H1 (cell line): ENCODE measurements at regions of chr2 and their contacts with region 1.

Region 1: DNA sequence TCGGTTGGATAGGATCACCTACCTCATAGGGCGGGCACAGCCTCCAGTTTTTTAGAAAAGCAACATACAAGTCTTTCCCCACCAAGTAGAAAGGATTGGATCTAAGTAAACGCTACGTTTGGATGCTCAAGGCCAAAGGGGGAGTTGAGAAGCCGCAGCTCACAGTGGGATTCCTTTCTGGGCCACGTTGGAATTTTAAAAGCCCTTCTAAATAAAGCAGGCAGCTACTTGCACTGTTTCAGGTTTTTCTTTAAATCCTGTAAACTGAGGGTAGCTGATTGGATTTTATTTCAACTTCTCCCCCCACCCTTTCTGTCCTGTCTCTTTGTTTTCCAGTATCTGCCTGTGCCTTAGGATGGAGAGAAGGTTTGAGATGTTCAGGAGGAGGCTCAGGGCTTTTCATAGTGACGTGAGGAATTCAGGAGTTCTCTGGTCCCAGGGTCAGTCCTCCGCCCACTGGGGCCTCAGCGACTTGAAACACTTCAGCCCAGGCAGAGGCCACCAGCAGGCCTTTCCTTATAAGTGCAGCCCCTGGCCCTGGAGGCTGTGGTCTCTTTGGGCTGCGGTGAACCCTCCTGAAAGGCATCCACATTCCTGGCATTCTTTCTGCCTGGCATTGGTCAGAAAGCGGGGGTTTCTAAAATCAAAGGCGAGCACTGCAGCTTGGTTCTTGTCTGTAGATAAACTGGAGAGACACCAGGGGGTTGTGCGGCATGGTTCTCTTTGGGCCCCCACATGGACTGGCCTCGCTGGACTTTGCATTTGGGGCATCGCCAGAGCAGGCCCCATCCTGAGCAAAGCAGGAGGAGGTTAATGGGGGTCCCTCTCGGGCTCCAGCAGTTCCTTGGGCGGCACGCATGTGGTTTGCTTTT is 44.5 kb downstream of the SH3BP4 start:
- DNase-seq: peak; percentile 68 to 87
- H3K4me3 ChIP-seq: peak overlapping the region in 1 of 4 experiments; percentile 26; a peak in 1 of 8 replicates
- H3K27ac ChIP-seq: peak overlapping the region; percentile 59; the same call in 1 of the 2 replicates
- H3K4me1 ChIP-seq: peaks cover 3 to 54% (median 31%) of the 10 kb centered on the region in 4 experiments
- H3K27me3 ChIP-seq: no peaks in the 10 kb centered on the region
- CTCF ChIP-seq: peak in 2 of 3 experiments; percentile 22 to 60; a peak in 3 of 4 replicates
- EP300 ChIP-seq: no peak
- POLR2A ChIP-seq: no peak
- RAD21 ChIP-seq: peak; percentile 52 to 57

Region 2: DNA sequence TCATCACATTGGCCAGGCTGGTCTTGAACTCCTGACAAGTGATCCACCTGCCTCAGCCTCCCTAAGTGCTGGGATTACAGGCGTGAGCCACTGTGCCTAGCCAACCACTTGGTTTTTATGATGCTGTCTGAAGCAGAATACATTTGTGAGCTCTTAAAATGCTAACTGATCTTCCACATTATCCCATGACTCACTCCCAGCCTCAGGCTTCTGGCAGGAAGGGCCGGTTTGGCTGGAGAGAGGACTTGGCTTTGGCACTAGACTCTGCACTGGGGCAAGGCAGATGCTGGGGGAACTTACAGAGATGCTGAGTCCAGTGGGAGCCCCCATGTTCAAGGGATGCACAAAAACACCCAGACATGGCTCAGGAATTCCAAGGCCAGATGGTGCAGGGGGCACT is 85.0 kb before region 1 on chr2:
- CTCF ChIA-PET with region 1: no interaction called
- POLR2A ChIA-PET with region 1: no interaction called
- DNase-seq: no peak
- H3K4me3 ChIP-seq: no peak overlapping the region
- H3K27ac ChIP-seq: no peak overlapping the region
- H3K4me1 ChIP-seq: peaks cover 0 to 4% (median under 1%) of the 10 kb centered on the region in 4 experiments; a peak in 2 of 7 replicates
- H3K27me3 ChIP-seq: no peaks in the 10 kb centered on the region
- CTCF ChIP-seq: no peak
- EP300 ChIP-seq: no peak
- POLR2A ChIP-seq: no peak
- RAD21 ChIP-seq: no peak

Region 3: GRCh38 chr2:234981197-234982117 is 14.8 kb before region 1 on chr2:
- CTCF ChIA-PET with region 1: interaction called, 10 read pairs
- POLR2A ChIA-PET with region 1: interaction called, 5 read pairs
- DNase-seq: peak; percentile 64 to 82
- H3K4me3 ChIP-seq: peak overlapping the region in 2 of 4 experiments; percentile 4 to 15; a peak in 1 of 8 replicates
- H3K27ac ChIP-seq: peak overlapping the region; percentile 54; the same call in 1 of the 2 replicates
- H3K4me1 ChIP-seq: peaks cover 10 to 39% (median 25%) of the 10 kb centered on the region in 4 experiments
- H3K27me3 ChIP-seq: no peaks in the 10 kb centered on the region
- CTCF ChIP-seq: no peak
- EP300 ChIP-seq: no peak
- POLR2A ChIP-seq: no peak
- RAD21 ChIP-seq: 0 out of 4 replicates have a peak, but pooled peaks of 1 of the 2 experiments have one; percentile 3

Region 4: GRCh38 chr2:235087812-235088495 is 91.6 kb after region 1 on chr2:
- CTCF ChIA-PET with region 1: no interaction called
- POLR2A ChIA-PET with region 1: no interaction called
- DNase-seq: no peak
- H3K4me3 ChIP-seq: no peak overlapping the region
- H3K27ac ChIP-seq: no peak overlapping the region
- H3K4me1 ChIP-seq: peaks cover 0 to 8% (median 0%) of the 10 kb centered on the region in 4 experiments; a peak in 3 of 7 replicates
- H3K27me3 ChIP-seq: no peaks in the 10 kb centered on the region
- CTCF ChIP-seq: no peak
- EP300 ChIP-seq: no peak
- POLR2A ChIP-seq: no peak
- RAD21 ChIP-seq: no peak